PC-3 (cell line): ENCODE measurements at regions of chr1 and their contacts with region 1.

Region 1: DNA sequence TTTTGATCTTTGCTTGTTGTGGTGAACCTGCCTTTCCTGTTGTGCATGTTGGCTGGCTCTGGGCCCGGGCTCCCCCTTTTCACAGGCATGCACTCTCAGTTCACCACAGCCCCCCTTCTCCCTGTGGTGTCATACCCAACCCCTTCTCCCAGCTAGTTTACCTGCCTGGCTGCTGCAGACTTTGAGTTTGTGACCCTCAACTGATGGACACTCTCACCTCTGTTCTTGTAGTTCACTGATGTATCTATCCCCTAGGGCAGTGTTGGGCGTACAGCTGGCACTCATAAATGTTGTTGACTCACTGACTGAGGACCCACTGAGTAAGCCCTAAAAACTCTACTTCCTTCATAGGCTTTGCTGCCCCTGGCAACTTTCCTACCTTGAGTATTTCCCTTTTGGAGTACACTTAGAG is 54.9 kb downstream of the WDR64 start:
- DNase-seq: peak; percentile 100
- ATAC-seq: peak; percentile 84
- H3K4me3 ChIP-seq: peak overlapping the region; percentile 1; the same call in 1 of the 2 replicates
- H3K27ac ChIP-seq: peak overlapping the region; percentile 82
- H3K4me1 ChIP-seq: peaks cover 51% of the 10 kb centered on the region
- H3K27me3 ChIP-seq: no peaks in the 10 kb centered on the region
- CTCF ChIP-seq: no peak

Region 2: DNA sequence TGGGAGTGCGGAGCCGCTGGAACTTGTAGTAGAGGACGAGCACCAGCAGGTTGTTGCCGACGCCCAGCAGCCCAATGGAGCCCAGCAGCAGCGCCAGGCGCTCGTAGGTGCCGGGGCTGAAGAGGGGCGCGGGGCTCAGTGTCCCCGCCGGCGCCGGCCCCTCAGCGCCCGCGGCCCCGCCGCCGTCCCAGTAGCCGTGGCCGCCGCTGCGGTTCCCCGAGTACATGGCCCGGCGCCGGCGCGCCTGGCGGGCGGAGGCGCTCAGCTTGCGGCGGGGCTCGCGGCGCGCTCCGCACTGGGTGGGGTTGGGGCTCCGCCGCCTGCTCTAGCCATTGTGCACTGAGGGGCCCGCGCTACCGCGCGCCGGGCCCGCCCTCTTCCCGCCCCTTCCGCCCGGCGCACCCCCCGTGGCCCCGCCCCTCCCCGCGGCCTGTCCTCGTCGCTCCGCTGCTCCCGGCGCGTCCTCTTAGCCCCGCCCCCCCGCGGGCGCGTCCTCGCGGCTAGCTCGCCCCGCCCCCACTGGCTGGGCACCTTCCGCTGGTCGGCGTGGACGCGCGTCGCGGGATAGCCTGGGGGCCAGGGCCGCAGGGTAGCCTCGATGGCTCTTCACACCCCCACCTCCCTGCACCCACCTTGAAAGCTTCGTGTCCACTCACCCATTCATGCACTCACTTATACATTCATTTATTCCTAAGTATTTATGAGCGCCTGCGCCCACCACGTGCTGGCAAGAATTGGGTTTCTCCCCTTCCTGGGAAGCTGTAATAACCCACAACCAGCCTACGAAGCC is 66.7 kb before region 1 on chr1 and contains the starts of genes CHML and OPN3:
- CTCF ChIA-PET with region 1: no interaction called
- POLR2A ChIA-PET with region 1: no interaction called
- intact Hi-C with region 1: loop called (anchors 1 kb)
- DNase-seq: peak; percentile 98
- ATAC-seq: peak; percentile 90
- H3K4me3 ChIP-seq: peak within 1 kb of the TSS; percentile 77
- H3K27ac ChIP-seq: peak within 1 kb of the TSS; percentile 56
- H3K4me1 ChIP-seq: peaks cover 47% of the 10 kb centered on the region
- H3K27me3 ChIP-seq: no peaks in the 10 kb centered on the region
- CTCF ChIP-seq: no peak
- total RNA-seq, gene CHML: 54.5 and 68.6 TPM in 2 replicates
- total RNA-seq, gene OPN3: 44.8 and 45.5 TPM in 2 replicates

Region 3: GRCh38 chr1:241658081-241658793 is 48.7 kb before region 1 on chr1:
- CTCF ChIA-PET with region 1: no interaction called
- POLR2A ChIA-PET with region 1: no interaction called
- intact Hi-C with region 1: loop called (anchors 1 kb)
- DNase-seq: peak; percentile 76
- ATAC-seq: peak; percentile 68
- H3K4me3 ChIP-seq: no peak overlapping the region
- H3K27ac ChIP-seq: peak overlapping the region; percentile 26
- H3K4me1 ChIP-seq: peaks cover 36% of the 10 kb centered on the region
- H3K27me3 ChIP-seq: no peaks in the 10 kb centered on the region
- CTCF ChIP-seq: no peak

Region 4: DNA sequence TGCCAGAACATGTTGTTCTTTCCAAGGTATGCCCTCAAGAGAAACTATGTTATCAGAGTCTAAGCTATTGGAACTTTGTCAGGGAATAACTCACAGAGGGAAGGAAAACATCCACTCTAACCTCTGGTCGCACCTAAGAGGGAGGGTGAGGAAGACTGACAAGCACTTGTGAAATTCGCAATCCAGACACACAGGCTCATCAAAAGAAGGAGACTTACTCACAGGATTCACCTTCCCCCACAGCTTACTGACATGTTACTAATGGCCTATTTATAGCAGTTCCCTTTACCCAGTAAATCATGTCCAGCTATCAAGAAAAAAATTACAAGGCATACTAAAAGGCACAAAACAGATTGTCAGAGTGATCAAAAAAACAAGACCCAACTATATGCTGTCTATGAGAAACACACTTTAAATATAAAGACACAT is 18.0 kb before region 1 on chr1:
- CTCF ChIA-PET with region 1: no interaction called
- POLR2A ChIA-PET with region 1: interaction called, 4 read pairs
- intact Hi-C with region 1: loop called (anchors 1 kb)
- DNase-seq: peak; percentile 97
- ATAC-seq: peak; percentile 97
- H3K4me3 ChIP-seq: peak overlapping the region; percentile 13; the same call in 1 of the 2 replicates
- H3K27ac ChIP-seq: peak overlapping the region; percentile 45
- H3K4me1 ChIP-seq: peaks cover 22% of the 10 kb centered on the region
- H3K27me3 ChIP-seq: no peaks in the 10 kb centered on the region
- CTCF ChIP-seq: no peak

Region 5: DNA sequence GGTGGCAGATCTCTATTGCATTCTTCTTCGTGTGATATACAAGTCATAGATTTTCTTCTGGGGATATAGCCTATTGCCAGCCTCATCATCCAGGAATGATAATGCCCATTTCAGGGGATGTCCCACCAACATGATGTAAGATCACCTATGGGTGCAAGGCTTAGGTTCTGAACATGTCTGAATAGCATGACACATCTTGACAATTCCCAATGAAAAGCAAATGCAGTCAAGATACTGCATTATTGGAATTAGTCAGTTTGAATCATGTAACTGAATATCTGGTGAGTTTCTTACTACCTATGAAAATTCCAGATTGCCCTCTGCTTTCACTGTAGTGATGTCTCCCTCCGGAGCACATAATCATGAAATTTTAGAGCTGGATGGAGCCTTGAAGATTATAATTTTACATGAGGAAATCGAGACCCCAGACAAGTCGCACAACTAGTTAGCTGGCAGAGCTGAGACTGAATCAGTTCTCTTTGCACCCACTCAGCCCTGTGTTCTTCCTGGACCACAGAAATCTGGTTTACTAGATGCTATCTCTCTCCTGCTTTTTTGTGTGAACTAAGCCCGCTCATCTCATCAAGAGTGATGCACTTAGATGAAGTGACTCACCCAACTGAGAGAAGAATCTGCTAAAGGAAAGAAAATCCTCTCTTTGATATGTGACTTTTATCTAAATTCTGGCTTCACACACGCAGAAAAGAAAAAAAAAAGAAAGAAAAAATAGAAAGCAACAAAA is 10.1 kb after region 1 on chr1:
- CTCF ChIA-PET with region 1: no interaction called
- POLR2A ChIA-PET with region 1: interaction called, 3 read pairs
- intact Hi-C with region 1: loop called (anchors 1 kb)
- DNase-seq: peak; percentile 67
- ATAC-seq: peak; percentile 41
- H3K4me3 ChIP-seq: no peak overlapping the region; the same call in 1 of the 2 replicates
- H3K27ac ChIP-seq: peak overlapping the region; percentile 60
- H3K4me1 ChIP-seq: peaks cover 23% of the 10 kb centered on the region
- H3K27me3 ChIP-seq: no peaks in the 10 kb centered on the region
- CTCF ChIP-seq: no peak

Region 6: DNA sequence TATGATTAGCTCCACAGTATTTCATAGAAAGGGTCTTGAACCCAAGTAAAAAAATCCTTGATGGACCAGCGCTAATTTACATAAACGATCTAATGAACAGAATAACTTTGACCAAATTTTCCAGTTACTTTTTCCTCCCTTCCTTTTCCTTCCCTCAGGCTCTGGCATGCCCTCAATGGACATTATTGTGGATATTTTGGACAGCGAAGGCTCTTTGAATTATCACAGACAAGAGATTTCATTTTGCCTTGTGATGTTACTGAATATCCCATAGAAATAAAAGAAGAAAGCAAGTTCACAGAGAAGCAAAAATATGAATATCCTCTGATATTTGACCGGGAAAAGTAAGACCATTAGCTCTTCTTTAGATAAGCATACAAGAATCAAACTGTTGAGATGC is 80.7 kb after region 1 on chr1:
- CTCF ChIA-PET with region 1: interaction called, 13 read pairs
- POLR2A ChIA-PET with region 1: no interaction called
- intact Hi-C with region 1: no loop called
- DNase-seq: no peak
- ATAC-seq: no peak
- H3K4me3 ChIP-seq: no peak overlapping the region
- H3K27ac ChIP-seq: no peak overlapping the region
- H3K4me1 ChIP-seq: 0 out of 2 replicates have a peak, but pooled peaks cover under 1% of the 10 kb centered on the region
- H3K27me3 ChIP-seq: no peaks in the 10 kb centered on the region
- CTCF ChIP-seq: no peak

Region 7: GRCh38 chr1:241817261-241817792 is 110.4 kb after region 1 on chr1:
- CTCF ChIA-PET with region 1: no interaction called
- POLR2A ChIA-PET with region 1: no interaction called
- intact Hi-C with region 1: loop called (anchors 1 kb)
- DNase-seq: peak; percentile 91
- ATAC-seq: peak; percentile 93
- H3K4me3 ChIP-seq: no peak overlapping the region
- H3K27ac ChIP-seq: peak overlapping the region; percentile 57
- H3K4me1 ChIP-seq: peaks cover 34% of the 10 kb centered on the region
- H3K27me3 ChIP-seq: no peaks in the 10 kb centered on the region
- CTCF ChIP-seq: no peak

Region 8: GRCh38 chr1:241847796-241848685 is 141.1 kb after region 1 on chr1 and contains the start of gene EXO1:
- CTCF ChIA-PET with region 1: no interaction called
- POLR2A ChIA-PET with region 1: no interaction called
- intact Hi-C with region 1: no loop called
- DNase-seq: peak; percentile 97
- ATAC-seq: peak; percentile 90
- H3K4me3 ChIP-seq: peak within 1 kb of the TSS; percentile 84
- H3K27ac ChIP-seq: peak within 1 kb of the TSS; percentile 89
- H3K4me1 ChIP-seq: peaks cover 18% of the 10 kb centered on the region
- H3K27me3 ChIP-seq: no peaks in the 10 kb centered on the region
- CTCF ChIP-seq: peak; percentile 66
- total RNA-seq, gene EXO1: 41.3 and 53.6 TPM in 2 replicates

Region 9: GRCh38 chr1:242065813-242066212 is 358.9 kb after region 1 on chr1:
- CTCF ChIA-PET with region 1: no interaction called
- POLR2A ChIA-PET with region 1: no interaction called
- intact Hi-C with region 1: no loop called
- DNase-seq: no peak
- ATAC-seq: no peak
- H3K4me3 ChIP-seq: no peak overlapping the region
- H3K27ac ChIP-seq: no peak overlapping the region
- H3K4me1 ChIP-seq: no peaks in the 10 kb centered on the region
- H3K27me3 ChIP-seq: peaks cover 79% of the 10 kb centered on the region
- CTCF ChIP-seq: no peak